Right ventricle myocardium inferior (tissue), 1 donor: ENCODE measurements at regions of chr4 and their contacts with region 1.

Region 1: GRCh38 chr4:22389240-22389870 is 126.5 kb downstream of the ADGRA3 start:
- DNase-seq: no peak
- ATAC-seq: no peak

Region 2: DNA sequence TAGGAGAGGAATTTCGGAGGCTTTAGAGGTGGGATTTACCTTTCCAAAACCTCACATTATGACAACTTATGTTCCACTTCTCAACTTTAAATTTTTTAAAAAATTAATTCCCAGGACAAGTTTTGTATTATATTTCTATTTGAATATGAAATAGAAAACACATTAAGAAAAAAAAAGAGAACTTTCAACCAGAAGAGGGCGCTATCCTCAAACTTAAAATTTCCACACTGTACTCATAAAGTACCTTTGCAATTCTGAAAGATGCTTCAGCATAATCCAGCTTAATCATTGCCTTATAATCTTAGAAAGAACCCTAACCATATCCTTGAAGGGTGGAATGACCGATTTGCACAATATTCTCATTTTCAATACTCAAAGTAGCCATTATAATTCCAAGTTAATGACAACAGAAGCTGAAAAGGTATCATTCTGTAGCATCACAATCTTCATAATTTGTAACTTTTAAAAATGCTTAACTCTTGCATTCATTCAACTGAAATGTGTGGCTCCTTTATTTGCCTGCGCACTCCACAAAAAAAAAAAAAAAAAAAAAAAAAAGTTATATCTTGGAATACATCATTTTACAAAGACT is 598.8 kb before region 1 on chr4:
- intact Hi-C with region 1: loop called (anchors 2 kb)
- DNase-seq: no peak
- ATAC-seq: no peak

Region 3: GRCh38 chr4:22129454-22130029 is 259.8 kb before region 1 on chr4:
- intact Hi-C with region 1: loop called (anchors 10 kb)
- DNase-seq: no peak
- ATAC-seq: no peak

Region 4: GRCh38 chr4:22434895-22435294 is 45.5 kb after region 1 on chr4:
- intact Hi-C with region 1: no loop called
- DNase-seq: no peak
- ATAC-seq: peak; percentile 79